SK-N-SH (cell line): ENCODE measurements at regions of chr2 and their contacts with region 1.

Region 1: DNA sequence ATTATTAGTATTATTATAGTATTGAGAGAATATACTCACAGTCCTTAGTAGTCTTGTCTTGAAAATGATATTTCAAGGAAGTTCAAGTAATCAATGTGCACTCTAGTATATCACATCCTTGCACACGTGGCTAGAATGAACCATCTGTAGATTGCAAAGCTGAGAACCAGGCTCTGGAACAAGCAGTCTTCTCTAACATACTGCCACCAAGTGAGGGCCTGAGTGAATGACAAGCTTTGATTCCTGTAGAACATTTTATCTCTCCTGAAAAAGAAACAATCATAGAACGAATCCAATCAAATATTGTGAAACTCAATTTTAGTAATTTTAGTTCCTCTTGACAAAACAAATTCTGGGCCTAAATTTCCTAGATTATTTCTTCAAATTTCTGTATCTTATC is 55.3 kb upstream of the SULT1C3 start:
- DNase-seq: peak; percentile 23
- H3K4me3 ChIP-seq: no peak overlapping the region
- H3K27ac ChIP-seq: no peak overlapping the region
- H3K4me1 ChIP-seq: no peaks in the 10 kb centered on the region; a peak in 1 of 4 replicates
- H3K27me3 ChIP-seq: no peaks in the 10 kb centered on the region
- CTCF ChIP-seq: peak; percentile 61
- EP300 ChIP-seq: no peak
- RAD21 ChIP-seq: peak; percentile 59

Region 2: DNA sequence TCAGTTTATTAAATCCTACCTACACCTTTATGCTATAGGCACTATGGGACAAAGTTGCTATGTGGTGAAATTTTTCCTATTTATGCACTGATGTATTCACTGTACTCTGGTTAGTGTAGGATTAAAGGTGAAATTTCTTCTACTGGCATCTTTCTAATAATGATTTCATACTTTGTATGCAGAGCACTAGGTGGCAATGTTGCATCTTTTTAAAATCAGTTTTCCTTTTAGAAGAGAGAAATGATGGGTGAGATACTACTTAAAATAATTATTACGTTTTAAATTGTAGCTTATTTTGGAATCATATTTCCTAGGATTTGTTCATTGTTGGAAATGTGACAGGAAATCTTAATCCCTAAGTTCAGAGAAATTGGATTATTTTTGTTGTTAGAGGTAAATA is 1546.4 kb before region 1 on chr2:
- CTCF ChIA-PET with region 1: interaction called, 11 read pairs
- POLR2A ChIA-PET with region 1: no interaction called
- DNase-seq: peak; percentile 26
- H3K4me3 ChIP-seq: no peak overlapping the region
- H3K27ac ChIP-seq: no peak overlapping the region
- H3K4me1 ChIP-seq: peaks cover 0 to 5% of the 10 kb centered on the region in 2 experiments; a peak in 2 of 4 replicates
- H3K27me3 ChIP-seq: no peaks in the 10 kb centered on the region
- CTCF ChIP-seq: peak; percentile 70
- EP300 ChIP-seq: no peak
- RAD21 ChIP-seq: peak; percentile 81

Region 3: DNA sequence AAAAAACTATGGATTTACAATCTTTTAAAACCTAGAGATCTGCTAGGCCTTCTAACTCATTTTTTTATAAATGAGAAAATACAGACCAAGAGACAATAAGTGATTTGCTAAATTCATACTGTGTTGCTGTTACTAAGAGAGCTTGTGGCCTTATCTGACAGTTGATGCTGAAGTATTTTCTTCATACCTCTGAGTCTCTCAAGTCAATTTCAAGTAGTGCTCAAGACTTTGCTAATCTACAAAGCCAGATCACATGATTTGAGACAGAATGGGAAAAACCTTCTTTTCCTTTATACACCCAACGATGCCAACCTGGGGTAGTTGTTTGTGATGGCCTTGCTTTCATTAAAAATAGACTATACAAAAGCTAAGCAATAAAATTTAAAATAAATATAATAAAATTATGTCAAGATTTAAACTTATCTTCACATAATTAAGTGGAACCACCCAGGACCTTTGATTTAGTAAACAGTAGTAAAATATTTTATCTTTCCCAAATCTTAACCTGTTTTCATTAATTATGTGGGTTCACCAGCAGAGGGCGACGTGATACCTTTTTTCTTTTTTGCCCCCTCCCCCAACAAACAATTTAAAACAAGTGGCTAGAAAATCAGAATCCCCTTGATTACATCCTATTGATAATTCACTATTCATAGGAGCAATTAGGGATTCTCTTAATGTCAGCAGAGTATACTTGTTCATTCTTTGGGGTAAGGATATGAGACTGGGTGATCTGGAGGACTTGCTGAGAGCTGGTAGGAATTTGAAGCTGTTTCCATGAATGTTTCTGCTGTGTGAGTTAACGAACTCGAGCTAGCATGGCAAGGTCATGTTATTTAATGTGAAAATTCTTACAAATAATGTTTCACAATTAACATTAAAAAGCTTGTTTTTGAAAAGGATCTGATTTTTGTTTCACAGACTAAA is 247.7 kb before region 1 on chr2:
- CTCF ChIA-PET with region 1: interaction called, 26 read pairs
- POLR2A ChIA-PET with region 1: no interaction called
- DNase-seq: peak; percentile 25
- H3K4me3 ChIP-seq: no peak overlapping the region; a peak in 1 of 4 replicates
- H3K27ac ChIP-seq: no peak overlapping the region
- H3K4me1 ChIP-seq: no peaks in the 10 kb centered on the region; a peak in 2 of 4 replicates
- H3K27me3 ChIP-seq: no peaks in the 10 kb centered on the region
- CTCF ChIP-seq: peak; percentile 71
- EP300 ChIP-seq: no peak
- RAD21 ChIP-seq: peak; percentile 75

Region 4: DNA sequence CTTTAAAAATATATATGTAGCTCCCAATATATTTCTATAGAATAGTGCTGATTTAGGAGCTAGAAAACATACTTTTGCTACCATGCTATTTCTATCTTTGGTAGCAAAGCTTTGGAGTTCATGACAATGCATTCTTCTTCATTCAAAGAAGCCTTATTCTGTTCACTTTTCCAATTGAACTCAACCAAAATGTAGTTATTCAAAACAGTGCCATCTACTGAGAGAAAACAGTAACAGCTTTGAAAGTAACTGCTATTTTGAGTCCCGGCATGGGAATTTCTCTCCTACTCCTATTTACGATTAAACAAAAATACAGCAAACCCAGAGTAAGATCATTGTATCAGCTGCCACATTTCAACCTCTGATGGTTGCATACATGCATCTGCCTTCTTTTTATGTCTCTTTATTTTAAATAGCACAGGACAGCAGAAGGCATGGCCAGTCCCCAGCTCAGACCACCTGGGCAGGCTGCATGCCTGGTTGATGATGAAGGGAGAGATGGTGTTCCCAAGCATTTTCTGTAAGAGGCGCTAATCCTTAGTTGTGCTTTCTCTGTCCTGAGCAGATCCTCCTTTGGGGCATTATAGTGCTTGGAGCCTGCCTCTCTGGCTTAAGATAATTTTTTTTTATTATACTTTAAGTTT is 14.3 kb before region 1 on chr2:
- CTCF ChIA-PET with region 1: interaction called, 10 read pairs
- POLR2A ChIA-PET with region 1: no interaction called
- DNase-seq: peak; percentile 9
- H3K4me3 ChIP-seq: peak overlapping the region in 1 of 2 experiments; percentile 20; a peak in 1 of 4 replicates
- H3K27ac ChIP-seq: no peak overlapping the region
- H3K4me1 ChIP-seq: no peaks in the 10 kb centered on the region
- H3K27me3 ChIP-seq: no peaks in the 10 kb centered on the region
- CTCF ChIP-seq: peak; percentile 69
- EP300 ChIP-seq: no peak
- RAD21 ChIP-seq: peak; percentile 60

Region 5: GRCh38 chr2:108194409-108195132 is 10.2 kb after region 1 on chr2:
- CTCF ChIA-PET with region 1: interaction called, 11 read pairs
- POLR2A ChIA-PET with region 1: no interaction called
- DNase-seq: peak; percentile 17
- H3K4me3 ChIP-seq: no peak overlapping the region
- H3K27ac ChIP-seq: no peak overlapping the region
- H3K4me1 ChIP-seq: no peaks in the 10 kb centered on the region
- H3K27me3 ChIP-seq: no peaks in the 10 kb centered on the region
- CTCF ChIP-seq: peak; percentile 74
- EP300 ChIP-seq: no peak
- RAD21 ChIP-seq: peak; percentile 56